ENCODE measurements at regions of chr5 and their contacts with region 1.

Region 1: GRCh38 chr5:81194633-81195333 is 38.3 kb upstream of the CKMT2 start:
- DNase-seq: peak; percentile 77
- H3K4me3 ChIP-seq: no peak overlapping the region
- H3K27ac ChIP-seq: no peak overlapping the region
- H3K4me1 ChIP-seq: no peaks in the 10 kb centered on the region
- H3K27me3 ChIP-seq: peaks cover 5 to 14% of the 10 kb centered on the region in 2 experiments
- CTCF ChIP-seq: peak; percentile 94 to 95
- POLR2A ChIP-seq: no peak

Region 2: GRCh38 chr5:80481019-80481893 is 713.5 kb before region 1 on chr5:
- CTCF ChIA-PET with region 1: interaction called, 12 read pairs
- POLR2A ChIA-PET with region 1: no interaction called
- dilution Hi-C with region 1: no loop called
- intact Hi-C with region 1: loop called (anchors 2 kb)
- DNase-seq: peak; percentile 59
- H3K4me3 ChIP-seq: no peak overlapping the region
- H3K27ac ChIP-seq: no peak overlapping the region
- H3K4me1 ChIP-seq: no peaks in the 10 kb centered on the region
- H3K27me3 ChIP-seq: no peaks in the 10 kb centered on the region
- CTCF ChIP-seq: peak; percentile 81 to 85
- POLR2A ChIP-seq: no peak

Region 3: GRCh38 chr5:80487829-80488721 is 706.7 kb before region 1 on chr5 and contains the start of gene FAM151B:
- CTCF ChIA-PET with region 1: no interaction called
- POLR2A ChIA-PET with region 1: no interaction called
- dilution Hi-C with region 1: no loop called
- intact Hi-C with region 1: loop called (anchors 2 kb)
- DNase-seq: peak; percentile 93
- H3K4me3 ChIP-seq: peak within 1 kb of the TSS; percentile 55 to 76 (median 76)
- H3K27ac ChIP-seq: peak within 1 kb of the TSS; percentile 15
- H3K4me1 ChIP-seq: no peaks in the 10 kb centered on the region
- H3K27me3 ChIP-seq: no peaks in the 10 kb centered on the region
- CTCF ChIP-seq: peak in 1 of 2 donors; percentile 11
- POLR2A ChIP-seq: peak; percentile 7
- total RNA-seq, gene FAM151B: 2.0 and 2.6 TPM in 2 replicates

Region 4: DNA sequence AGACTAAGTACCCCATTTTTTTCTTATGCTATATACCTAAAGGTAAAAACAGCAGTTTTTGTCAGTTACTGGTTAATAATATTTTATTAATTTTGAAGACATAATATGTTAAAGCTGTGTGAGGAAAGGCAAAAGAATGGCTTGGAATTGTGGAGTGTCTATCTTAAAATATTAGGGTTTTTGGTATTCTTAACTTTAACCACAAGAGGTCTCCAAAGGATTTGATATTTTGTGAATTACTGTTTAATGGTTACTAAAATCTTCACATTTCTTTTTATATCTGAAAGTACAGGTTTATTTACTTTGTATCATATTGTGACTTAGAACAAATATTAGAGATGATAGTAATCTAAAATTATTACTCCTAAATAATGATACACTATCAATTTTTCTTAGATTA is 508.0 kb before region 1 on chr5:
- CTCF ChIA-PET with region 1: interaction called, 50 read pairs
- POLR2A ChIA-PET with region 1: no interaction called
- dilution Hi-C with region 1: no loop called
- intact Hi-C with region 1: loop called (anchors 1 kb)
- DNase-seq: peak; percentile 27
- H3K4me3 ChIP-seq: no peak overlapping the region
- H3K27ac ChIP-seq: no peak overlapping the region
- H3K4me1 ChIP-seq: no peaks in the 10 kb centered on the region
- H3K27me3 ChIP-seq: no peaks in the 10 kb centered on the region
- CTCF ChIP-seq: peak; percentile 1 to 14
- POLR2A ChIP-seq: no peak

Region 5: DNA sequence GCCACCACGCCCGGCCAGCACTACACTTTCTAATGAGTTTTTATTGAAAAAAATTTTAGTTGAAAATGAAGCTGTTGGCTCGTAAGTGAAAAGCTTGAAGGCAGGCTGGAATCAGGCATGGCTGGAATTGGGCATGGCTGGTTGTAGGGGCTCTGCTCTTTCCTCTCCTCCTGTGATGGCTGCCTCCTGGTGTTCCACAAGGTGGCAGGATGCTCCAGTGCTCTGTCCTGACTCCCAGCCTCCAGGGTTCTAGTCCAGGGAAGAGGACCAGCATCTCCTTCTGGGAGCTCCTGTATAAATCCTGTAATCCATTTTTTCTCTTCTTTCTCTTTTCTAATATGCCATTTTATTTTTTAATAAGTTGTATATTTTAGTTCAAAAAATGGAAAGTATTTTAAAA is 482.8 kb before region 1 on chr5:
- CTCF ChIA-PET with region 1: interaction called, 9 read pairs
- POLR2A ChIA-PET with region 1: no interaction called
- dilution Hi-C with region 1: no loop called
- intact Hi-C with region 1: loop called (anchors 1 kb)
- DNase-seq: no peak
- H3K4me3 ChIP-seq: no peak overlapping the region
- H3K27ac ChIP-seq: no peak overlapping the region
- H3K4me1 ChIP-seq: peaks cover 6% of the 10 kb centered on the region
- H3K27me3 ChIP-seq: no peaks in the 10 kb centered on the region
- CTCF ChIP-seq: peak in 1 of 2 donors; percentile 57
- POLR2A ChIP-seq: no peak

Region 6: GRCh38 chr5:81181576-81182318 is 13.0 kb before region 1 on chr5:
- CTCF ChIA-PET with region 1: interaction called, 11 read pairs
- POLR2A ChIA-PET with region 1: no interaction called
- dilution Hi-C with region 1: no loop called
- intact Hi-C with region 1: no loop called
- DNase-seq: no peak
- H3K4me3 ChIP-seq: no peak overlapping the region
- H3K27ac ChIP-seq: no peak overlapping the region
- H3K4me1 ChIP-seq: no peaks in the 10 kb centered on the region
- H3K27me3 ChIP-seq: no peaks in the 10 kb centered on the region
- CTCF ChIP-seq: no peak
- POLR2A ChIP-seq: no peak

Region 7: GRCh38 chr5:81207009-81207408 is 12.2 kb after region 1 on chr5:
- CTCF ChIA-PET with region 1: interaction called, 12 read pairs
- POLR2A ChIA-PET with region 1: no interaction called
- dilution Hi-C with region 1: no loop called
- intact Hi-C with region 1: no loop called
- DNase-seq: no peak
- H3K4me3 ChIP-seq: no peak overlapping the region
- H3K27ac ChIP-seq: no peak overlapping the region
- H3K4me1 ChIP-seq: no peaks in the 10 kb centered on the region
- H3K27me3 ChIP-seq: peaks cover 0 to under 1% of the 10 kb centered on the region in 2 experiments
- CTCF ChIP-seq: peak in 1 of 2 donors; percentile 11
- POLR2A ChIP-seq: no peak

Region 8: DNA sequence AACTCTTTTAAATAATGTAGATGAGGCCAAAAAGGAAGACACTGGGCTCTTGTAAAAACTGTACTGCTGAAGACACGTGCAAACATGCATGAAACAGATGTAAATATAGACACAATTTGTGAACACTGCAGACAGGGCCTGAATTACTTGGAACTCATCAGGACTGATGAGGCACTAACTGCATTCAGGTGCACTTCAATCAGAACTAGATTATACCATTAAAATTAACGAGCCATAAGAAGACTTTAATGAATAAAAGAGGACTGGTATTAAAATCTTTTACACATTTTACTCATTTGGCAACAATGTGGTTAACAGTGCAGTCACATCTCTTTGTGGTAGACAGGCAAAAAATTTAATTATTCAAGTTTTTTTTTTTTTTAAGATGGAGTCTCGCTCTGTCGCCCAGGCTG is 93.2 kb after region 1 on chr5:
- CTCF ChIA-PET with region 1: no interaction called
- POLR2A ChIA-PET with region 1: no interaction called
- dilution Hi-C with region 1: no loop called
- intact Hi-C with region 1: no loop called
- DNase-seq: no peak
- H3K4me3 ChIP-seq: no peak overlapping the region
- H3K27ac ChIP-seq: no peak overlapping the region
- H3K4me1 ChIP-seq: no peaks in the 10 kb centered on the region
- H3K27me3 ChIP-seq: no peaks in the 10 kb centered on the region
- CTCF ChIP-seq: no peak
- POLR2A ChIP-seq: no peak

Measured in endothelial cell of umbilical vein (primary cell).